Naive thymus-derived CD8-positive, alpha-beta T cell (primary cell): ENCODE measurements at regions of chr2 and their contacts with region 1.

Region 1: DNA sequence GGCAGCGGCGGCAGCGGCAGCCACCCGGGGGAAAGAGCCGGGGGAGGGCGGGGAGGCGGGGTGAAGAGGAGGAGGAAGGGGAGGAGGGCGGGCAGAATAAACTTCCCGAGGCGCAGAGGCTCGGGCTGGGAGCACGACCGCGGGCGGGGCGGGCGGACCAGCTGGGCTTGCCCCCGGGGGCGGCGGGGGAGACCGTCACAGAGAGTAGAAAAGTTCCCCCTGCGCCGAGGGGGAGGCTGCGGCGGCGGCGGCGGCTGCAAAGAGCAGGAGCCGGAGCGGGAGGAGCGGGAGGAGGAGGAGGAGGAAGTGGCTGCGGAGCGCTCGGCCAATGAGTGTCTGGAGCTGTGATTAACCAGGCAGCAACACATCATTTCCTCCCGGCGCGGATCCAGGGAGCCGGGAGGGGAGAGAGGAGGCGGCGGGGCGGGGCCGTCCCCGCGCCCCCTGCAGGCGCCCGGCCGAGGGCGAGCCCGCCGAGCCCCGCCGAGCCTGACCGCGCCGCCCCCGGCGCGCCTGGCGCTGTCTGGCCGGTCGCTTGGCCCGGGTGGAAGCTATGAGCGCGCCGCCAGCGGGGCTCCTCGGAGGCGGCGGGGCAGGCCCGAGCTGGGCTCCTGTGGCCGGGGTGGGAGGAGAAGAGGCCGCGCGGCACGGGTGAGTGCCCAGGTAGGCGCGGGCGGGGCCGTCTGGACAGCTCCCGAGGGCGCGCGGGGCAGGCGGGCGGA is at the start of gene ACVR1:
- DNase-seq: peak; percentile 53 to 86 (median 74)
- ATAC-seq: peak; percentile 76 to 77
- H3K4me3 Mint-ChIP-seq: peak within 1 kb of the TSS; percentile 85 to 99 (median 92)
- H3K27ac Mint-ChIP-seq: peak within 1 kb of the TSS; percentile 29 to 94 (median 90)
- H3K4me1 Mint-ChIP-seq: peaks cover 12 to 48% (median 38%) of the 10 kb centered on the region in 4 donors
- H3K27me3 Mint-ChIP-seq: no peaks in the 10 kb centered on the region
- polyA plus RNA-seq, gene ACVR1: 2.6 to 4.3 (median 3.7) TPM

Region 2: DNA sequence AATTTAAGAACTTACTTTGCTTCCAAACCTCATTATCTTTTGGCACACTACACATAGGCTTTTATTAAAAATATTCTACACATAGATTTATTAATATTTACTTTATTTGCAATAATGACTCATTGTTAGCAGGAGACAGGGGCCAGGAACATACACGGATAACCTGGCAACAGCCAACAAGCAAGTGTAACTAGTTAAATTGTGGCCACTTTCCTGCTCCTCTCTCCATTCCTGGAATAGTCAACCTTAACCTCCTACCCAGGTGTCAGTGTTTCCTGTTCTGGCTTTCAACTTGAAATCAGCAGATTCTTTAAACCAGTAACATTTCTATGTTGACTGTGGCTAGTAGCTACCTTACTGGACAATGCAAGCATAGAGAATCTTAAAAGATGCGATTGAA is 26.6 kb before region 1 on chr2:
- POLR2A ChIA-PET with region 1: no interaction called
- DNase-seq: no peak
- ATAC-seq: no peak
- H3K4me3 Mint-ChIP-seq: no peak overlapping the region
- H3K27ac Mint-ChIP-seq: no peak overlapping the region
- H3K4me1 Mint-ChIP-seq: peaks cover 2 to 22% (median 6%) of the 10 kb centered on the region in 4 donors
- H3K27me3 Mint-ChIP-seq: no peaks in the 10 kb centered on the region

Region 3: DNA sequence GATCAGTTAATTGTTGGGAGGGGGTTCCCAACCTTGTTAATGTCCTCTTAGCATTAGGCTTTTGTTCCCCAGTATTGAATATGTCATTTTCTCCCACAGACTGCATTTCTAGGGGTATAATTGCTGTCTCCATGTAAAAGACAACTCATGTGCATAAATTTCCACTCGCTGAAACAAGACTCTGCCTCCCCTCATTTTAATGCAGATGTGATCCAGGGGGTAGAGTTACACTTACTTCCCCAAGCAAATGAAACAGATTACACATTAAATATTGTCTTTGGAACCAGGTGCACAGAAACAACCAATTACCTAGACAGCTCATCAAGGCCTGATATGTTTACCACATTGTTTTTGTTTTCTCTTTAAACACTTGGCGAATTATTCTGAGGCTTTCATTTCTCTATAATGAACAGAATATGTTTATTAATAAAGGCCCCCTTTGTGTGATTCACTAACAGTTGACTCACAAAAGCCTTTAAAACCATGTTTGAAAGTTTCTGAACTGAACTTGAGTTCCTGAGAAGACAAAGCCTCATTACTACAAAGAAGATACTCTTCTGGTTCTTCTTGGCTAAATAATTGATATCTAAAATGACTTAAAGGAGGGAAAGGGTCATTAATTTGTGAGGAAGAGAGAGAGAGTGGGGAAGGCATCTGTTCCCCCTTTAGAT is 14.9 kb after region 1 on chr2:
- POLR2A ChIA-PET with region 1: interaction called, 47 read pairs
- DNase-seq: no peak
- ATAC-seq: no peak
- H3K4me3 Mint-ChIP-seq: peak overlapping the region in 8 of 10 donors; percentile 1 to 76 (median 71)
- H3K27ac Mint-ChIP-seq: peak overlapping the region in 8 of 10 donors; percentile 41 to 85 (median 81)
- H3K4me1 Mint-ChIP-seq: peaks cover 16 to 36% (median 29%) of the 10 kb centered on the region in 4 donors
- H3K27me3 Mint-ChIP-seq: peaks cover 0 to 4% (median 1%) of the 10 kb centered on the region in 5 donors

Region 4: DNA sequence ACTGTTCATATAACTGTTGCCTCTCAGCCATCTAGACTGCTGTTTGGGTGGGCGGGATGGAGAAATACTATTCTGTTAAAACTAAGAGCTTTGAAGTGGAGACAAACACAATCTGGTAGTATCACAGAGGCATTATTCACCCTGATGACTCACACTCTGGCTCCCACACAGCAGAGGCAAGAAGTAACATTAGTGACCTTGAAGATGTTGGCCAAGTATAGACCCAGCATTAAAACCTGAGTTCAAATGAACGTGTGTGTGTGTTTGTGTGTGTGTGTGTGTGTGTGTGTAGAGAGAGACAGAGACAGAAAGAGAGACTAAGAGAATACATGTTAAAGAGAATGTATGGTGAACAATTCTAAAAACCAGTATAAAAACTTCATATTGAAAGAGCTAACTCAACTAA is 22.4 kb after region 1 on chr2:
- POLR2A ChIA-PET with region 1: interaction called, 47 read pairs
- DNase-seq: peak in 3 of 10 donors; percentile 23 to 35 (median 26)
- ATAC-seq: peak; percentile 37 to 74
- H3K4me3 Mint-ChIP-seq: peak overlapping the region; percentile 61 to 92 (median 88)
- H3K27ac Mint-ChIP-seq: peak overlapping the region; percentile 84 to 99 (median 98)
- H3K4me1 Mint-ChIP-seq: peaks cover 31 to 69% (median 61%) of the 10 kb centered on the region in 4 donors
- H3K27me3 Mint-ChIP-seq: no peaks in the 10 kb centered on the region